Common myeloid progenitor, CD34-positive (primary cell): ENCODE measurements at regions of chr5 and their contacts with region 1.

Region 1: DNA sequence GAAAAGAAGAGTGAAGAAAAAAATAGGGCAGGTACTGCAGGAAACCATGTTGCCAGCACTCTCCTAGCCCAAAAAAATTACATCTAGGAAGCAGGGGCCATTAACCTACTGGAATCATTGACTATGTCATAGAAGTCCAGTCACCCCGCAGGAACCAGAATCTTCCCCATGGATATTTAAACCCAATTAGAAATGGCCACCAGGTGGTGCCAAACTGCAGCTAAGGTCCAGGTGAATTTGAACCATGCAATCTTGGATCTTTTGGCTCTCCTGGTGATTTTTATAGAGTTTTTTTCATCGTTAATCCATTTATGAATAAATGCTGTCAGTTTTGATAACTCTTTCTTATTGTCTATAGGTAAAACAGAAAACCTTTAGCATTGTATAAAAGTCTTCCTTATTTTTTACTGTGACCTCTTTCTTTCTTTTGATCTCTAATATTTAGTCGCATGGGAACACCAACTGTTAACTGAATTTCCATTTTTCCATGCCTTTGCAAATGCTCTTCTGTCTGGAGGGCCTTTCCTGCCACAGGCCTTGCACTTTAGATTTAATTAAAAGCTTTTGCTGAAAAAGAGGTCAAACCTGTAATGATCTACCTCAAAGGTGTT is 147.5 kb upstream of the FGF10 start:
- DNase-seq: peak; percentile 8 to 28 (median 13)
- H3K4me3 ChIP-seq: no peak overlapping the region
- H3K27ac ChIP-seq: no peak overlapping the region
- H3K4me1 ChIP-seq: no peaks in the 10 kb centered on the region
- H3K27me3 ChIP-seq: no peaks in the 10 kb centered on the region

Region 2: DNA sequence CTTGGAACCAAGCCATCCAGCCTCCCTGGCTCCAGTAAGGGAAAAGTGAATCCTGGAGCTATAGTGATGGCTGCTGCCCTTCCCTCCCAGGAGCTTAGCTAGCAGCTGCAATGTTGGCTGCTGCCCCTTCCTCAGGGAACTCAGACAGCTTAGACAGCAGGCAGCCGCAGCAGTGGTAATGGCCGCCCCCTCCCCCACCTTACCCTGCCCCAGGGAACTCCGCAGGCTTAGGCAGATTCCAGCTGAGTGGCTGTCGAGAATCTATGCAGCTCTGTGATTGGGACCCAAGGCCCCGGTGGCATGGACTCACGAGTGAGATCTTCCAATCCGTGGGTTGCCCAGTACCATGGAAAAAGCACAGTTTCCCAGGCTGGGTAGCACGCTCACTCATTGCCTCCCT is 555.2 kb before region 1 on chr5:
- CTCF ChIA-PET with region 1: no interaction called
- POLR2A ChIA-PET with region 1: no interaction called
- DNase-seq: no peak
- H3K4me3 ChIP-seq: no peak overlapping the region
- H3K27ac ChIP-seq: no peak overlapping the region
- H3K4me1 ChIP-seq: no peaks in the 10 kb centered on the region
- H3K27me3 ChIP-seq: no peaks in the 10 kb centered on the region

Region 3: DNA sequence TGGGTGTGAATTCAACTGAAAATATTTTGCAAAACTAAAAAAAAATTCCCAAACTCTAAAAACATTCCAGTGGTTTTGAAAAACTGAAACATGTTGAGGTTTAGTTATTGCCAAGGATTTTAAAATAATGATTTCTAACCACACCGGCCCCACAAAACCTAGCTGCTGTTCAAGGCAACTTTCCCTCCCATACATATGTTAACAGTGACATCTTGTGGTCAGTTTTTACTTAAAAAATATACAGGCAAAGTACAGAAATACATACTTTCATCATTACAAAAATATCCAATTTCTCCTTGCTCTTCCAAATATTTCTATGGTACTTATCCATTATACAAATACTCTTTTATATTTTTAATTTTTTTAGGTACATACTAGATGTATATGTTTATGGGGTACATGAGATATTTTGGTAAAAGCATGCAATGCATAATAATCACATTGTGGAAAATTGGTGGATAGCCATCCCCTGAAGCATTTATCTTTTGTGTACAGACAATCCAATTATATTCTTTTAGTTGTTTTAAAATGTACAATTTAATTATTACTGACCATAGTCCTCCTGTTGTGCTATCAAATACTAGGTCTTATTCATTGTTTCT is 237.6 kb after region 1 on chr5:
- CTCF ChIA-PET with region 1: interaction called, 10 read pairs
- POLR2A ChIA-PET with region 1: no interaction called
- DNase-seq: peak; percentile 23 to 55 (median 51)
- H3K4me3 ChIP-seq: no peak overlapping the region
- H3K27ac ChIP-seq: no peak overlapping the region
- H3K4me1 ChIP-seq: no peaks in the 10 kb centered on the region
- H3K27me3 ChIP-seq: no peaks in the 10 kb centered on the region